ENCODE measurements at regions of chr4 and their contacts with region 1.

Region 1: GRCh38 chr4:176195184-176195978 is at the start of gene SPATA4:
- DNase-seq: peak; percentile 97
- ATAC-seq: peak; percentile 91
- H3K4me3 Mint-ChIP-seq: peak within 1 kb of the TSS; percentile 60
- H3K27ac Mint-ChIP-seq: peak within 1 kb of the TSS; percentile 35
- H3K4me1 Mint-ChIP-seq: peaks cover 30% of the 10 kb centered on the region
- H3K27me3 Mint-ChIP-seq: peaks cover 25% of the 10 kb centered on the region
- total RNA-seq, gene SPATA4: not detected

Region 2: DNA sequence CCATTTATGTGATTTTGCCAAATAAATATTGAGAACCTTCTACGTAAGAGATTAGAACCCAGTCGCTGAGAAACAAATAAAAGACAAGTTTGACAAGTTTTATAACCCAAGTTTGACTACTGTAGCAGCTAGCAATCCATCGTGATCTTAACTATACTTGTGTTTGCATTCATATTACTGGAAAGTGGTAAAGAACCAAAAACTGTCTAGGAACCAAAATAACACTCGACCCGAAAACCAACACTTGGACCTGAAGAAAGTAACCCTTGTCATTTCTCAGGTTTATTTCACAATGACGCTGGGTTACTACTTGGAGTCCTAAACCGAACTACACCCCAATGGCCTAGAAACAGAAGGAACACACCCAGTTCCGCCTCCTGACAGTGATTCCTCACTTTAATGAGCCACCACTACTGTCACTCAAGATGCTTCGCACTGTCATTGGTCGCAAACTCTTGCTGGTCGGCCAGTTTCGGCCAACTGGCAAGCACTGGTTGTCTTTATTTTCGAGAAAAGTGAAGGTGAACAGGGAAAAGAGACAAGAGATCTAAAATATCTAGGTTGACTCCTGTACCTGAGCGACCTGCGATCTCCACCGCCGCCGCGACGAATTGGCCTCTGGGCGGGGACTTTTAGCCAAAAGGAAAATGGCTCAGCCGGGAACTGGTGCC is 1912.4 kb before region 1 on chr4:
- CTCF ChIA-PET with region 1: no interaction called
- POLR2A ChIA-PET with region 1: no interaction called
- intact Hi-C with region 1: loop called in 1 of 2 experiments (anchors 2 kb)
- DNase-seq: peak; percentile 84
- ATAC-seq: peak; percentile 97
- H3K4me3 Mint-ChIP-seq: peak overlapping the region; percentile 98
- H3K27ac Mint-ChIP-seq: peak overlapping the region; percentile 100
- H3K4me1 Mint-ChIP-seq: peaks cover 64% of the 10 kb centered on the region
- H3K27me3 Mint-ChIP-seq: no peaks in the 10 kb centered on the region

Region 3: GRCh38 chr4:175139205-175139604 is 1056.2 kb before region 1 on chr4:
- CTCF ChIA-PET with region 1: no interaction called
- POLR2A ChIA-PET with region 1: no interaction called
- intact Hi-C with region 1: no loop called
- DNase-seq: no peak
- ATAC-seq: no peak
- H3K4me3 Mint-ChIP-seq: no peak overlapping the region
- H3K27ac Mint-ChIP-seq: no peak overlapping the region
- H3K4me1 Mint-ChIP-seq: no peaks in the 10 kb centered on the region
- H3K27me3 Mint-ChIP-seq: no peaks in the 10 kb centered on the region

Region 4: DNA sequence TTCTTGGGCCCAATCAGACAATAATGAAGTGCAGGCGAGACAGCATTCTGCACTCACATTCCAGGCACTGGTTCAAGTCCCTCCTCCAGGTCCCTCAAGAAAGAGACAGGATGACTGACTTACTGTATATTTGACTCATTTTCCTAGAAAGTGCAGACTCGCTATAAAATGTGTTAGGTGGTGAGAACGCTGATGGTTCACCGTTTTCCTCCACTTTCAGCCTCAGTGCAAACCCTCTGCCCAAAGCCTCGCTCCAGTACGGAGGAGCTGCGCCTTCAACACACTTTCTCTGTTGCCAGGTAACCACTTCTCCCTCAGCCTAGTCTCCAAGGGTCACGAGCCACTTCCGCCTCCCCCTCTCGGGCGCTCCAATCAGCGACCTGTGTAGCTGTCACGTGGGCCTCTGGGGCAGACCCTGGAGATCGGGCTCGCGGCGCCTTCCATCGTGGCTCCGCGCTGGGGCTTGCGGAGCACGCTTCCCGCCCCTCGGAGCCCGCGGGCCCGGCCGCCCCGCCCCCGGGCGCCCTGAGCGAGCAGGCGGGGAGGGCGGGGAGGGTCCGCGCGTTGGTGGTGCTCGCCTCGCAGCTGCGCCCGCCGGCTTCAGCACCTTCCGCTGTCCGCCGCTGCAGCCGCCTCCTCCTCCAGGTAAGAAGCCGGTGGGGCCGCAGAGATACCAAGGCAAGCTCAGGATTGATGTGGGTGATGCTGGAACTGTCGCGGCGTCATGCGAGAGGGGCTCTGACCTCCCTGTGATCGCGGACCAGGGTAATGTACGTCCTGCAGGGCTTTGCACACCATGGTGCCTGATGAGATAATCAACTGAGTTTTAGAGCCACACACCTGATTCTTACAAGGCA is 129.7 kb before region 1 on chr4 and contains the start of gene WDR17:
- CTCF ChIA-PET with region 1: no interaction called
- POLR2A ChIA-PET with region 1: no interaction called
- intact Hi-C with region 1: loop called (anchors 1 kb)
- DNase-seq: peak; percentile 88
- ATAC-seq: peak; percentile 99
- H3K4me3 Mint-ChIP-seq: peak within 1 kb of the TSS; percentile 76
- H3K27ac Mint-ChIP-seq: peak within 1 kb of the TSS; percentile 19
- H3K4me1 Mint-ChIP-seq: peaks cover 11% of the 10 kb centered on the region
- H3K27me3 Mint-ChIP-seq: peaks cover 21% of the 10 kb centered on the region
- total RNA-seq, gene WDR17: 2.2 to 2.5 TPM

Region 5: DNA sequence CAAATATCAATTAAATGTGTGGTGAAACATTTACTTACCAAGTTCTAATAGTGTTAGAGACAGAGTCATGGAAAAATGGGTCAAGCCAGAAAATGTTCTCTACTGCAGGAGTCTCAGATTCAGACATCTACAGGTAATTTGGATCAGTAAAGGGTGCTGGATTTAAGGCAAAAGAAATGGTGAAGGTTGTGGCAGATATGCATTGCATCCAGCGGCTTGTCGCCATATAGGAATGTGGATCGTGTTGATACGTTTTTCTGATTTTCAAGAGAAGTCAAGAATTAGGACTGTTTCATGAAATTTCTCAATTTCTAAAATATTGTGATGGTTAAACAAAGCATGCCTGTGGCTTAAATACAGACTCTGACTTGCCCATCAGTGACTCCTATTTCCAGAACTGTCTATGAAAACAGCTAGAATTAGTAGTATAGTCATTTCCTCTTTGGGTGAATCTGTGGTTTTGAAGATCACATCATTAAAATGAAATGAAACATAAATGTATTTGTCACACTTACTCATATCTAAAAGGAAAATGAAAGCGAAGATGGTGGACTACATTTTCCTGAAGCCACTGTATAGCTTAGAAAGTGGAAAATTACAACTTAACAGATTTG is 707.4 kb after region 1 on chr4:
- CTCF ChIA-PET with region 1: no interaction called
- POLR2A ChIA-PET with region 1: no interaction called
- intact Hi-C with region 1: loop called in 1 of 2 experiments (anchors 2 kb)
- DNase-seq: no peak
- ATAC-seq: peak; percentile 95
- H3K4me3 Mint-ChIP-seq: no peak overlapping the region
- H3K27ac Mint-ChIP-seq: no peak overlapping the region
- H3K4me1 Mint-ChIP-seq: peaks cover 5% of the 10 kb centered on the region
- H3K27me3 Mint-ChIP-seq: no peaks in the 10 kb centered on the region

Region 6: GRCh38 chr4:177309522-177310371 is 1114.4 kb after region 1 on chr4 and contains the start of gene NEIL3:
- CTCF ChIA-PET with region 1: no interaction called
- POLR2A ChIA-PET with region 1: no interaction called
- intact Hi-C with region 1: loop called in 1 of 2 experiments (anchors 2 kb)
- DNase-seq: peak; percentile 98
- ATAC-seq: peak; percentile 84
- H3K4me3 Mint-ChIP-seq: peak within 1 kb of the TSS; percentile 97
- H3K27ac Mint-ChIP-seq: peak within 1 kb of the TSS; percentile 84
- H3K4me1 Mint-ChIP-seq: peaks cover 27% of the 10 kb centered on the region
- H3K27me3 Mint-ChIP-seq: no peaks in the 10 kb centered on the region
- total RNA-seq, gene NEIL3: 18.1 to 18.6 TPM

Region 7: GRCh38 chr4:177441803-177442622 is 1246.6 kb after region 1 on chr4 and contains the start of gene AGA:
- CTCF ChIA-PET with region 1: no interaction called
- POLR2A ChIA-PET with region 1: no interaction called
- intact Hi-C with region 1: loop called in 1 of 2 experiments (anchors 1 kb)
- DNase-seq: peak; percentile 98
- ATAC-seq: peak; percentile 91
- H3K4me3 Mint-ChIP-seq: peak within 1 kb of the TSS; percentile 97
- H3K27ac Mint-ChIP-seq: peak within 1 kb of the TSS; percentile 100
- H3K4me1 Mint-ChIP-seq: peaks cover 24% of the 10 kb centered on the region
- H3K27me3 Mint-ChIP-seq: no peaks in the 10 kb centered on the region
- total RNA-seq, gene AGA: 20.8 to 27.7 TPM

Measured in activated CD4-positive, alpha-beta T cell treated with anti-CD3 and anti-CD28 coated beads for 36 hours (primary cell).